Esophagus muscularis mucosa (tissue), 4 donors: ENCODE measurements at regions of chr4 and their contacts with region 1.

Region 1: DNA sequence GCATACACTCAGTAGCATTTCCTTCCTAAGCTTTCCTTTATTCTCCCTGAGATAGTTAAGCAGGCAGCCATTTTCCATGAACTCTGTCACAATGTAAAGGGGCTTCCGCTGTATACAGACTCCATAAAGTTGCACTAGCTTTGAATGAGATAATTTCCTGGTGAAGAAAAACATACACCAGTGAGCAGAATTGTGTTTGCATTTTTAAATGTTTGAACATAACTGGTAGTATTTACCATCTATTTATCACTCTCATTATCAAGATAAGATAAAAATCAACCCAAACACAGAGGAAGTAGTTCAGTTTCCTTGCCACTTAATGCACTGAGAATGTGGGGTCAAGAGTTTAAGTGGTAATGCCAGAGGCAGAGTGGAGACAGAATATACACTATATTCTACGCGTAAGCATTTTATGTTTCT is 54.1 kb downstream of the TXK start:
- DNase-seq: no peak
- H3K4me3 ChIP-seq: no peak overlapping the region
- H3K27ac ChIP-seq: no peak overlapping the region
- H3K4me1 ChIP-seq: no peaks in the 10 kb centered on the region
- H3K27me3 ChIP-seq: no peaks in the 10 kb centered on the region
- CTCF ChIP-seq: no peak
- EP300 ChIP-seq: no peak
- POLR2A ChIP-seq: no peak

Region 2: DNA sequence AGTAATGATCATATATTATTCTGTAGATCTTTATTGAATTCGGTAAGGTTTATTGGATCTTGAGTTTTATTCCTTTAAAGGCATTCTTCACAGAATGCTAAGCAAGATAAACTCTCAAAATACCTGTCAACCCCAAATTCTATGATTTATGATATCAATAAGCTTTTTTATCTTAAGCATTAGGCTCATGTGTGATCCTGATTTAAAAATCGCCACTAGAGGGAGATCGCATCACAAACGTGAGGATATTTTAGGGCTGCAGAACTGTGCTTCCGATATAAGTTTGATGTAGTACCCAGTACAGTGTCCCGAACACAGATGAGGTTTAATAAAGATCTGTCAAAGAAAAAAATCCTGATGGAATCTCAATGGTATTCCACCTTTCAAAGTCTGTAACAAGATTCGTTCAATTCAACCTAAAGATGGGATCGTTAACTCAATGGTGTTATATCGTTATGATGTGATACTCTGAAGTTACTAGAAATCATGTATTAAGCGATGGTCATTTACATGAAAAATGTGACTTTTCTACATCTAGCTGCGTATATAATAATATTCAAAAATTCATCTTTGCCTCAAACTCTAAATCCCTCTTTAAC is 411.1 kb before region 1 on chr4:
- intact Hi-C with region 1: loop called (anchors 10 kb)
- DNase-seq: no peak
- H3K4me3 ChIP-seq: no peak overlapping the region
- H3K27ac ChIP-seq: no peak overlapping the region
- H3K4me1 ChIP-seq: no peaks in the 10 kb centered on the region
- H3K27me3 ChIP-seq: no peaks in the 10 kb centered on the region
- CTCF ChIP-seq: peak; percentile 54 to 69 (median 60)
- EP300 ChIP-seq: no peak
- POLR2A ChIP-seq: no peak

Region 3: GRCh38 chr4:48016141-48017103 is 63.6 kb before region 1 on chr4 and contains the starts of genes CNGA1 and NIPAL1:
- intact Hi-C with region 1: loop called (anchors 5 kb)
- DNase-seq: no peak
- H3K4me3 ChIP-seq: peak within 1 kb of the TSS; percentile 58 to 71 (median 64)
- H3K27ac ChIP-seq: no peak within 1 kb of the TSS
- H3K4me1 ChIP-seq: peaks cover 6 to 19% (median 18%) of the 10 kb centered on the region in 4 donors
- H3K27me3 ChIP-seq: peaks cover 0 to 36% (median 6%) of the 10 kb centered on the region in 4 donors
- CTCF ChIP-seq: peak in 1 of 3 experiments; percentile 12
- EP300 ChIP-seq: no peak
- POLR2A ChIP-seq: no peak
- total RNA-seq, gene CNGA1: 0.33 to 4.0 TPM in 2 of 4 donors, not detected in the others
- total RNA-seq, gene NIPAL1: 0.33 to 1.3 (median 0.60) TPM

Region 4: GRCh38 chr4:48058284-48058962 is 21.6 kb before region 1 on chr4:
- intact Hi-C with region 1: no loop called
- DNase-seq: no peak
- H3K4me3 ChIP-seq: no peak overlapping the region
- H3K27ac ChIP-seq: no peak overlapping the region
- H3K4me1 ChIP-seq: no peaks in the 10 kb centered on the region
- H3K27me3 ChIP-seq: no peaks in the 10 kb centered on the region
- CTCF ChIP-seq: no peak
- EP300 ChIP-seq: no peak
- POLR2A ChIP-seq: no peak